ENCODE measurements at regions of chr20 and their contacts with region 1.

Region 1: GRCh38 chr20:63894358-63895201 is at the start of gene DNAJC5:
- DNase-seq: peak; percentile 98
- ATAC-seq: peak; percentile 94
- H3K4me3 ChIP-seq: peak within 1 kb of the TSS; percentile 38 to 81 (median 60)
- H3K4me3 Mint-ChIP-seq: peak within 1 kb of the TSS; percentile 93
- H3K27ac ChIP-seq: peak within 1 kb of the TSS; percentile 42 to 80
- H3K27ac Mint-ChIP-seq: peak within 1 kb of the TSS; percentile 91
- H3K4me1 ChIP-seq: peaks cover 16 to 36% of the 10 kb centered on the region in 2 donors
- H3K4me1 Mint-ChIP-seq: peaks cover 37% of the 10 kb centered on the region
- H3K27me3 ChIP-seq: no peaks in the 10 kb centered on the region
- H3K27me3 Mint-ChIP-seq: no peaks in the 10 kb centered on the region
- CTCF ChIP-seq: no peak
- total RNA-seq, gene DNAJC5: 32.6 and 33.3 TPM in 2 replicates

Region 2: GRCh38 chr20:63980806-63981728 is 86.5 kb after region 1 on chr20 and contains the start of gene PRPF6:
- CTCF ChIA-PET with region 1: interaction called, 7 read pairs
- POLR2A ChIA-PET with region 1: interaction called, 5 read pairs
- intact Hi-C with region 1: loop called (anchors 2 kb)
- DNase-seq: peak; percentile 96
- ATAC-seq: peak; percentile 72
- H3K4me3 ChIP-seq: peak within 1 kb of the TSS; percentile 63 to 85 (median 79)
- H3K4me3 Mint-ChIP-seq: peak within 1 kb of the TSS; percentile 90
- H3K27ac ChIP-seq: peak within 1 kb of the TSS; percentile 69 to 87
- H3K27ac Mint-ChIP-seq: peak within 1 kb of the TSS; percentile 94
- H3K4me1 ChIP-seq: peaks cover 30 to 46% of the 10 kb centered on the region in 2 donors
- H3K4me1 Mint-ChIP-seq: peaks cover 53% of the 10 kb centered on the region
- H3K27me3 ChIP-seq: no peaks in the 10 kb centered on the region
- H3K27me3 Mint-ChIP-seq: no peaks in the 10 kb centered on the region
- CTCF ChIP-seq: peak; percentile 86
- total RNA-seq, gene PRPF6: 79.7 and 82.9 TPM in 2 replicates